Spleen (tissue), 13 donors: ENCODE measurements at regions of chr4 and their contacts with region 1.

Region 1: GRCh38 chr4:86927843-86928395 is 6.9 kb upstream of the AFF1 start:
- DNase-seq: no peak
- H3K4me3 ChIP-seq: no peak overlapping the region
- H3K27ac ChIP-seq: no peak overlapping the region
- H3K4me1 ChIP-seq: peaks cover 0 to 27% (median 15%) of the 10 kb centered on the region in 6 donors
- H3K27me3 ChIP-seq: no peaks in the 10 kb centered on the region
- CTCF ChIP-seq: no peak
- POLR2A ChIP-seq: no peak

Region 2: GRCh38 chr4:87078987-87079486 is 151.1 kb after region 1 on chr4:
- intact Hi-C with region 1: no loop called
- DNase-seq: no peak
- H3K4me3 ChIP-seq: no peak overlapping the region
- H3K27ac ChIP-seq: peak overlapping the region in 6 of 8 donors; percentile 10 to 64 (median 36)
- H3K4me1 ChIP-seq: peaks cover 21 to 77% (median 44%) of the 10 kb centered on the region in 6 donors
- H3K27me3 ChIP-seq: no peaks in the 10 kb centered on the region
- CTCF ChIP-seq: no peak
- POLR2A ChIP-seq: no peak

Region 3: GRCh38 chr4:87093443-87094123 is 165.7 kb after region 1 on chr4:
- intact Hi-C with region 1: loop called (anchors 5 kb)
- DNase-seq: no peak
- H3K4me3 ChIP-seq: no peak overlapping the region
- H3K27ac ChIP-seq: peak overlapping the region in 4 of 8 donors; percentile 8 to 59 (median 37)
- H3K4me1 ChIP-seq: peaks cover 17 to 57% (median 33%) of the 10 kb centered on the region in 6 donors
- H3K27me3 ChIP-seq: no peaks in the 10 kb centered on the region
- CTCF ChIP-seq: peak; percentile 44 to 81 (median 73)
- POLR2A ChIP-seq: no peak

Region 4: DNA sequence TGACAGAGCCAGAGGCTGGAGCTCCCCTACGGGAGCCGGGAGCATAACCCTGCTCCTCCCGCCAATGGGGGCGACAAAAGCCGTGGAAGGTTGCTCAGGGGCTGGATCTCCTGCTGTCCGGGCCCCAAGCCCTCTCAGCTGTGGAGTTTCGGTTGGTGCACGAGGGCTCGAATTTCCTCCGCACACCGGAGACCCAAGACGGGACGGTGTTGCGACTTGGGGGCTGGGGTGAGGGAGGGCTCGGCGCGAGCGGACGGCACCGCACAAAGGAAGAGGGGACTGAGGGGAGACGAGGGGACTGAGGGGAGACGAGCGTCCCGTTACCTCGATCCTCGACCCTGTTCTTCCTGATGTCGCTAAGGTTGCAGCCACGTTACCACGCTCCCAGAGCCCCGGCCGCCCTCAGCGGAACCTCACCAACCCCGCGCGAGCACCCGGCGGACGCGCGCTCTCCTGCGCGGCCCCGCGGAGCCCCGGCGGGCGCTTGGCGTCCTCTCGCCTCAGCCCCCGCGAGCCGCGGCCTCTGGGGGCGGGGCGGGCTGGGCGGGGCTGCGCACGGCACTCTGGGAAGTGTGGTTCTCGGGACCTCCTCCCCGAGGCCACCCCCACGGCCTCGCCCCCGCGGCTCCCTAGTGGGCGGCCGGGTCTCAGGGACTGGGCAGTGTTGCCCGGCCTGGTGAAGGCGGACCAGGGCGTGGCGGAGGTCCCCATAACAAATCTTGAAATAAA is 292.3 kb after region 1 on chr4 and contains the start of gene KLHL8:
- intact Hi-C with region 1: loop called (anchors 10 kb)
- DNase-seq: peak; percentile 97
- H3K4me3 ChIP-seq: peak within 1 kb of the TSS; percentile 72 to 95 (median 92)
- H3K27ac ChIP-seq: peak within 1 kb of the TSS; percentile 92 to 98 (median 97)
- H3K4me1 ChIP-seq: peaks cover 7 to 50% (median 23%) of the 10 kb centered on the region in 6 donors
- H3K27me3 ChIP-seq: no peaks in the 10 kb centered on the region
- CTCF ChIP-seq: peak in 2 of 11 experiments; percentile 4 to 30
- POLR2A ChIP-seq: peak in 2 of 3 donors; percentile 12 to 51
- total RNA-seq, gene KLHL8: 12.3 to 17.6 (median 15.9) TPM